PC-3 (cell line): ENCODE measurements at regions of chr4 and their contacts with region 1.

Region 1: GRCh38 chr4:110211007-110211769 is 12.8 kb upstream of the ELOVL6 start:
- DNase-seq: peak; percentile 51
- ATAC-seq: 0 out of 2 replicates have a peak, but pooled peaks have one; percentile 35
- H3K4me3 ChIP-seq: no peak overlapping the region
- H3K27ac ChIP-seq: no peak overlapping the region
- H3K4me1 ChIP-seq: no peaks in the 10 kb centered on the region; the same call in 1 of the 2 replicates
- H3K27me3 ChIP-seq: no peaks in the 10 kb centered on the region
- CTCF ChIP-seq: peak; percentile 80

Region 2: DNA sequence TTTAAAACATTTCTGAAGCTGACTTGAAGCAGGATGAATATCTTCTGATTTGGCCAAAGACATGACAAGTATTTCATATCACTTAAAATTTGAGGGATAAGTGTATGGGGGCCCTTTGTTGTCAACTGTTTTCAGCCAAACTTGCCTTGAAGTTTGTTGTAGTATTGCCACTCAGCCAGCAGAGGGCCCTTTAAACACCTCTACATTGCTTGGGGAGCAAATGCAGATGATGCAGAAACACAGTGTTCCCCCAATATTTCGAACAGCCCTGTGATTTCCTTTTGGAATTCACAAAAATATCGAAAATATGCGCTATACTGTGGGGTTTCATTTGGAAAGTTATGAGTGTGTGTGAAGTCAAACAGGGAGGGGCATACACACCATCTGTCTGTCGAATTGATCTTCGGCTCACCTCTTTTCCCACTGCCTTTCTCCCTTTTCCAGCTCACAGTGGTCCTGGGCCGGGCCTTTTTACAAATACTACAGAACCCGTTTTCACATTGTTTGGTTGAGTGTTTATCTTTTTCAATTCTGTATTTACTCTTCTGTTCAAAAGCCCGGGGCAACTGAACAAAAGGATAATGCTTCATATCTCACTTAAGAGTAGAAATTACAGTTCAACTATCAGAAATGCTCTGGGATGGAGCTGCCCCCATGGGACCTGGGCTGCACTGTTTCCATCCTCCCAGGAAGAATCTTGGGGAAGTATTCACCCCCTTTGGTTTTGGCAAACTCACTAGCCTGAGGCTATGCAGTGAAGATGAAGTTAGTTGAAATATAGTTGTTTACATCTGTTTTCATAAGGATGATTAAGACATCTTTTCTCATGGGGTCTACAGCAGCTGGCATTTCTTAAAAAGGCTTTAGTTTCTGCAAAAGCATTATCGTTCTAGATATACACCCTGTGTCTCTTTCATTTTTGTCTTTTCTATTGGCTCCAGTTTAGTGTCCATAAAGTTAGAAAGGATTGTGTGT is 160.9 kb before region 1 on chr4:
- CTCF ChIA-PET with region 1: no interaction called
- POLR2A ChIA-PET with region 1: no interaction called
- intact Hi-C with region 1: loop called (anchors 1 kb)
- DNase-seq: peak; percentile 55
- ATAC-seq: no peak
- H3K4me3 ChIP-seq: no peak overlapping the region
- H3K27ac ChIP-seq: no peak overlapping the region
- H3K4me1 ChIP-seq: peaks cover 13% of the 10 kb centered on the region
- H3K27me3 ChIP-seq: no peaks in the 10 kb centered on the region
- CTCF ChIP-seq: peak; percentile 80

Region 3: GRCh38 chr4:110550260-110550659 is 339.1 kb after region 1 on chr4:
- CTCF ChIA-PET with region 1: no interaction called
- POLR2A ChIA-PET with region 1: interaction called, 13 read pairs
- intact Hi-C with region 1: no loop called
- DNase-seq: peak; percentile 59
- ATAC-seq: peak; percentile 74
- H3K4me3 ChIP-seq: no peak overlapping the region
- H3K27ac ChIP-seq: no peak overlapping the region
- H3K4me1 ChIP-seq: peaks cover 10% of the 10 kb centered on the region
- H3K27me3 ChIP-seq: no peaks in the 10 kb centered on the region
- CTCF ChIP-seq: no peak